HAP-1 (cell line): ENCODE measurements at regions of chrX and their contacts with region 1.

Region 1: GRCh38 chrX:96182366-96182765 is 502.3 kb upstream of the DIAPH2 start:
- DNase-seq: peak; percentile 75 to 83
- H3K4me3 ChIP-seq: no peak overlapping the region
- H3K4me1 ChIP-seq: peaks cover 16% of the 10 kb centered on the region
- H3K27me3 ChIP-seq: no peaks in the 10 kb centered on the region

Region 2: GRCh38 chrX:95505721-95506120 is 676.6 kb before region 1 on chrX:
- in situ Hi-C with region 1: loop called (anchors 25 kb)
- DNase-seq: peak; percentile 38 to 50
- H3K4me3 ChIP-seq: no peak overlapping the region
- H3K4me1 ChIP-seq: peaks cover 7% of the 10 kb centered on the region
- H3K27me3 ChIP-seq: no peaks in the 10 kb centered on the region

Region 3: DNA sequence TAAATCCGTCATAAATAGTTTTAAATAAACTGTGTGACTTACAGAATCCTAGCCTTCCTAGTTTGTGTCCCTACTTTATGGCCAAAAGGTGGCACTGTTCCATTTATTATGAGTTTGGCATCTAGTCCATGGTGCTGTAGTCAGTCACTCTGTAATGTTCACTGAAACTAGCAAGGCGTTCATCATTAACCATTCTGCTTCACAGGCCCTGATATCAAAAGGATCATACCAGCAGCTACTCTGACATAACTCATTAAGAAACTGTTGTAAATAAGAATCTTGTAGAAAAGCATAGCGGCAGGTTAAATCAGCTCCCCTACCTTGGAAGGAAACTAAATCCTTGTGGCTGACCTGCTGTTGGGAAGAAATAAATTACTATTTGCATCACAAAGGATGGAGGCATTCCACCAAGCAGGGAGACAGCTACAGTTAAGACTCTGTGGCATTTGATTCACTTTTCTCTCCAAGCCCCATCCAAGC is 417.4 kb before region 1 on chrX:
- in situ Hi-C with region 1: loop called (anchors 25 kb)
- DNase-seq: peak; percentile 53 to 88
- H3K4me3 ChIP-seq: no peak overlapping the region
- H3K4me1 ChIP-seq: peaks cover 18% of the 10 kb centered on the region
- H3K27me3 ChIP-seq: no peaks in the 10 kb centered on the region